ENCODE measurements at regions of chr10 and their contacts with region 1.

Region 1: DNA sequence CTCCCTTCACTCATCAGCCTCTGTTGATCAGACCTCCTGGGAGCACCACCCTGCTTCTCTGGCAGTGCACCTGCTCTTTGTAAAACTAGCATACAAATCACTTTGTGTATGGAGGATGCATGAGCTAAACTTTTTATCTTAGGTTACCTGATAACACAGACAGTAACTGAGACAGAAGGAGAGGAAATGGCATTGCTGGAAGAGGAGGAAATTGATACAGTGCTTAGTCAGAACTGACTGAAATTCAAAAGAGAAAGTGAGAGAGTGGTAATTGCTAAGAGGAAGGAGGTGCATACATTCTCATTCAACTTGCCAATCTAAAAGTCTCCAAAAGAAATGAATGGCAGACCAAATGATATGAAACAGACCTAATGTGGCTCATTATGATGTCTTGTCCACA is 1120.7 kb downstream of the GATA3 start:
- DNase-seq: no peak
- H3K4me3 Mint-ChIP-seq: no peak overlapping the region
- H3K27ac Mint-ChIP-seq: no peak overlapping the region
- H3K4me1 Mint-ChIP-seq: peaks cover 10% of the 10 kb centered on the region
- H3K27me3 Mint-ChIP-seq: peaks cover 5% of the 10 kb centered on the region

Region 2: DNA sequence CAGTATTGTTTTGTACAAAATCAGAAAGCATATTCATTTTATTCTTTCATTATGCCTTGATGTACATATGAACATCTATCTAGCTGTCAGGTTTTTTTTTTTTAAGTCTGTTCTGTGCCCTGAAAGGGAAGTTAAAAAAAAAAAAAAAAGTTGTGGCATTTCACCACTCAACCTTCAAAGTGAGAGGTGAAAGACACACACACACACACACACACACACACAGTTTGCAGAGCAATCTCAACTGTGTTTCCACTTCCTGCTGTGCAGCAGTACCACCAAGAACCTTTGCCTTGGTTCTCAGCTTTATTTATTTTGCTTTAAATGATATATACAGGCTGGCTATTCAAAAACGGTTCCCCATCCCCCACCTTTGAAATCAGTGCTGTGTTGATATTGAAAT is 165.1 kb before region 1 on chr10:
- intact Hi-C with region 1: loop called (anchors 10 kb)
- DNase-seq: no peak
- H3K4me3 Mint-ChIP-seq: no peak overlapping the region
- H3K27ac Mint-ChIP-seq: no peak overlapping the region
- H3K4me1 Mint-ChIP-seq: no peaks in the 10 kb centered on the region
- H3K27me3 Mint-ChIP-seq: peaks cover 2% of the 10 kb centered on the region

Measured in activated T-helper 1 cell treated with anti-CD3 and anti-CD28 coated beads, Interleukin-12 subunit alpha, Interleukin-12 subunit beta, Interleukin-2, Interleukin-4 antibody, amounts not matched to agents 30 ng/mL and 10 ng/mL and 1 ng/mL, durations not matched to agents 14 hours and 24 hours and 36 hours (primary cell).